ENCODE measurements at regions of chr18 and their contacts with region 1.

Region 1: DNA sequence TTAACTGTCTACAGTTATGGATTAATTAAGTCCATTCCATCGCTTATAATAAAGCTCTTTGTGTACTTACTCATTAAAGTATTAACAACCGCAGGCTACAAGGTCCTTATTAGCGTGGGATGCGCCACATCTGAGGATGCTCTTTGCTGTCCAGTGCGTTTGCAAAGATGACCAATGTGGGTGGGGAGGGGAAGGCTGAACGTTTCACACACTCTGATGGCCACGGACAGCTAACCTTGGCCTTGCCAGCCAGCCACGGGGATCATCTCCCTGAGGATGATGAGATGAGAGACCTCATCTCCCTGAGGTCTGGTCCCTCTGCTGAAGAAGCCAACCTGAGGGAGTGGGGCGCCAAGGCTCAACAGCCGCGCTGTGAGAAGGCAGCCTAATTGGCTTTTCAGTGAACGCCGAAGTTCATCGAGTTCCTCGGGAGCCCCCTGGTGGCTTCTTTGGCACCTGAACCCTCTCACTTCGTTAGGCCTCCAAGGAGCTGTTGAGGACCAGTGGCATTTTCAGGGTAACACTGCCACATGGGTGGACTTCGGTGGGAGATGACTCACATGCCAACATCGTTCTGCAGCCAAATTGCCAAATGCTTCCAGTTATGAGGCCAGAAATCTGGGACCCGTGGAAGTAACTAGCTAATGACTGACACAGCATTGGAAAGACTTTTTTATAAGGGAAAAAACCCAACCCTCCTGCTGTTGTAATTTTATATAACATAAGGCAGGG is 69.3 kb upstream of the SEC11C start:
- DNase-seq: peak; percentile 88
- H3K4me3 Mint-ChIP-seq: no peak overlapping the region
- H3K27ac Mint-ChIP-seq: no peak overlapping the region
- H3K4me1 Mint-ChIP-seq: no peaks in the 10 kb centered on the region
- H3K27me3 Mint-ChIP-seq: no peaks in the 10 kb centered on the region

Region 2: GRCh38 chr18:58402247-58402646 is 668.1 kb before region 1 on chr18:
- CTCF ChIA-PET with region 1: interaction called, 4 read pairs
- intact Hi-C with region 1: loop called (anchors 5 kb)
- DNase-seq: no peak
- H3K4me3 Mint-ChIP-seq: no peak overlapping the region
- H3K27ac Mint-ChIP-seq: no peak overlapping the region
- H3K4me1 Mint-ChIP-seq: peaks cover 25% of the 10 kb centered on the region
- H3K27me3 Mint-ChIP-seq: no peaks in the 10 kb centered on the region

Region 3: DNA sequence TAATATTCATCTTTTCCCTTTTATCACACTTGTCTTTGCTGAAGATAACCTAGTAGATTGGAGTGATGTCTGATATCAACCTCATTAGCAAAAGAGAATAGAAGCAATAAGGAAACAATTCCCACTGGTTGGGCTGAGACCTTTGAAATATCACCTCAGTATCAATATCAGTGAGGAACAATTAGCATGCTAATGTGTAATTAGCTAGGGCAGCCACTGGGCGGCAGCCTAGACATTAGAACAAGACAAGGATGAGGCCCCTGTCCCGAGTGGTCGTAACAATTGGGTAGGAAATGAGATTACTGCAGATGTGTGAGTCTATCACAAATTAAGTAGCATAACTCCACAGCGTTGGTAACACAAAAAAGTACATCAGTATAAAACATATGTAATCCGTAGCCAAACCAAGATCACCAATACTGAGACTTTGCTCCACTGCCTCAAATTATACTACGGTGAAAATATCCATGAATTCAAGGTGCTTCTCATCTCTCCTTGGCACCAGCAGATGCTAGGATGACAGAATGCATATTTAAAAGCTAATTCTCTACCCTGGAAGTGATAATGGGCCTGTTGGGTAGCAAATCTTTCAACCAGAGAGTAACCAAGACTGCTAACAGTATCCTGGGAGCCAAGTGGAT is 540.5 kb before region 1 on chr18:
- CTCF ChIA-PET with region 1: no interaction called
- intact Hi-C with region 1: loop called (anchors 2 kb)
- DNase-seq: peak; percentile 80
- H3K4me3 Mint-ChIP-seq: no peak overlapping the region
- H3K27ac Mint-ChIP-seq: no peak overlapping the region
- H3K4me1 Mint-ChIP-seq: peaks cover 20% of the 10 kb centered on the region
- H3K27me3 Mint-ChIP-seq: peaks cover 3% of the 10 kb centered on the region

Region 4: GRCh38 chr18:58776084-58776483 is 294.3 kb before region 1 on chr18:
- CTCF ChIA-PET with region 1: interaction called, 94 read pairs
- intact Hi-C with region 1: loop called (anchors 1 kb)
- DNase-seq: no peak
- H3K4me3 Mint-ChIP-seq: no peak overlapping the region
- H3K27ac Mint-ChIP-seq: no peak overlapping the region
- H3K4me1 Mint-ChIP-seq: no peaks in the 10 kb centered on the region
- H3K27me3 Mint-ChIP-seq: peaks cover 12% of the 10 kb centered on the region

Region 5: GRCh38 chr18:58781627-58782194 is 288.6 kb before region 1 on chr18:
- CTCF ChIA-PET with region 1: interaction called, 36 read pairs
- intact Hi-C with region 1: loop called (anchors 1 kb)
- DNase-seq: peak; percentile 85
- H3K4me3 Mint-ChIP-seq: no peak overlapping the region
- H3K27ac Mint-ChIP-seq: no peak overlapping the region
- H3K4me1 Mint-ChIP-seq: no peaks in the 10 kb centered on the region
- H3K27me3 Mint-ChIP-seq: peaks cover 21% of the 10 kb centered on the region

Region 6: GRCh38 chr18:59085797-59086196 is 15.4 kb after region 1 on chr18:
- CTCF ChIA-PET with region 1: interaction called, 11 read pairs
- intact Hi-C with region 1: no loop called
- DNase-seq: no peak
- H3K4me3 Mint-ChIP-seq: no peak overlapping the region
- H3K27ac Mint-ChIP-seq: no peak overlapping the region
- H3K4me1 Mint-ChIP-seq: peaks cover 12% of the 10 kb centered on the region
- H3K27me3 Mint-ChIP-seq: peaks cover 23% of the 10 kb centered on the region

Measured in activated naive CD4-positive, alpha-beta T cell treated with anti-CD3 and anti-CD28 coated beads for 36 hours (primary cell).